Caco-2 (cell line): ENCODE measurements at regions of chr2 and their contacts with region 1.

Region 1: DNA sequence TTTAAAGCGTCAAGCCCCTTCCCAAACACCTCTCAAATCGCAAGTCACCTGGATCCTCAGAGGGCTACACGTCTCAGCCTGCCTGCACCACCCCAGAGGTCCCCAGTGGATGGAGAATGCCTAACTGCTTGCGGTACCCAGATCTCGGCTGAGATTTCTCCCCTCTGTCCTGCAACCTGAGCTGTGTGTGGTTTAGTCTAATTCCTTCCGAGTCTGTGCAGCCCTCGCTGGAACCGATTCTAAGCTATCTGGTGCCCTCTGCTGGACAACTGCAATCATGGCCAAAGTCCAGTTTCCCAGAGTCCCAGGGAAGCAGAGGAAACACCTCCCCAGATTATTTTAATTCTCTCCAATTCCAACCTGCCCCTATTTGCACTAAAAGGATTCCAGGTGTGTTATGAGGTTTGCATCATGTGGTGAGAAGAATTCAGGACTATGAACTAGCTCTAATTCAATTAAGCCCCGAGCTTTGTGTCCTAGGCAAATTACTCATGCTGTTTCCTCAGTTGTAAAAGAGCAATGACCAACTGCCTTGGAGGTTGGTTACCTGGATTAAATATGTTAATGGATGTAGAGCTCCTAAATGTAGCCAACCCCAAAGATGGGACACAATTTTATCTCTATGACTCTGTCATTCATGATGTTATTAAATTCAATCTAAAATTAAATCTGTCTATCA is 276.1 kb upstream of the NCKAP5 start:
- DNase-seq: peak; percentile 68 to 79
- H3K4me3 ChIP-seq: no peak overlapping the region
- H3K4me3 Mint-ChIP-seq: no peak overlapping the region
- H3K27ac Mint-ChIP-seq: no peak overlapping the region
- H3K4me1 ChIP-seq: no peaks in the 10 kb centered on the region
- H3K4me1 Mint-ChIP-seq: peaks cover 12% of the 10 kb centered on the region
- H3K27me3 ChIP-seq: no peaks in the 10 kb centered on the region
- H3K27me3 Mint-ChIP-seq: no peaks in the 10 kb centered on the region
- CTCF ChIP-seq: peak; percentile 80 to 90

Region 2: DNA sequence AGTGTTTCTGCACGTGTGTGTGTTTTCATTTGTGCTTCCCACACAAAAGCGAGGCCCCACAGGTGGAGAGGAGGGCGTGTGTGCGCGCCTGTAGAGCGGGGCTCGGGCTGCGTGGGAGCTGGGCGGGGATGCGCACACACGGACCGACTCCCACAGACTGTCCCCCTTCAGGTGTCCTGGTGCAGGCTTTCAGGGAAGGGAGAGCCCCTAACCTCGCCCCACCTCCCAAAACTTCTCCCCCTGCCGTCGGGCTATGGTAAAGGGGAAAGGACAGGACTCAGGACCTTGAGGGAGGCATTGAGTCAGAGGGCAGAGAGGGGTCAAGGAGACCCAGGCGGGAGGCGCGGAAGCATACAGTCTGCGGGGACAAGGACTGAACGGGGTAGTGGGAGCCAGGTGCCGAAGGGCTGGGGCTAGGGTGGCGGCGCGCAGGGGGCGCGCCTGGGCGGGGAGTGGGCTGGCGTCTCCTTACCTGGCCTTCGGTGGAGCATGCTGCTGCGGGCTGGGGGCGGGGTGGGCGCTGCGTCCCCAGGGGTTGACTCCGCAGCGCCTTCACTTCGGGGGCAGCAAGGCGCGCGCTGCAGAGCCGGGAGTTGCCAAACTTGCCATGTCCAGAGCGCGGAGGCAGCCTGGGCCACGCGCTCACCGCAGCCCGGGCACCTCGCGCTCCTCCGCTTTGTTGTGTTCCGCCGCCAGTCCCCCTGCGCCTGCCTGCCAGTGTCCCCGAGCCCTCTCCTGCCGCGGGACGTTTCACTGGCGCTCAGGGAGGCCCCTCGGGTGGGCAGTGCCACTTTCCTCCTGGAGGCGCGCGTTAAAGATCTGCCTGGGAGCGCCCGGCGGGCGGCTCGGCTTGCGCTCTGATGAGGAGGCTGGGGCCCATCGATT is 578.1 kb before region 1 on chr2:
- CTCF ChIA-PET with region 1: interaction called, 3 read pairs
- POLR2A ChIA-PET with region 1: no interaction called
- intact Hi-C with region 1: loop called (anchors 1 kb)
- DNase-seq: no peak
- H3K4me3 ChIP-seq: peak overlapping the region; percentile 24; the same call in 1 of the 2 replicates
- H3K4me3 Mint-ChIP-seq: peak overlapping the region; percentile 66
- H3K27ac Mint-ChIP-seq: no peak overlapping the region
- H3K4me1 ChIP-seq: no peaks in the 10 kb centered on the region
- H3K4me1 Mint-ChIP-seq: peaks cover 15% of the 10 kb centered on the region
- H3K27me3 ChIP-seq: no peaks in the 10 kb centered on the region
- H3K27me3 Mint-ChIP-seq: no peaks in the 10 kb centered on the region
- CTCF ChIP-seq: no peak

Region 3: GRCh38 chr2:133561045-133561852 is 283.1 kb before region 1 on chr2:
- CTCF ChIA-PET with region 1: no interaction called
- POLR2A ChIA-PET with region 1: no interaction called
- intact Hi-C with region 1: loop called (anchors 1 kb)
- DNase-seq: peak in 1 of 2 experiments; percentile 21
- H3K4me3 ChIP-seq: no peak overlapping the region
- H3K4me3 Mint-ChIP-seq: no peak overlapping the region
- H3K27ac Mint-ChIP-seq: no peak overlapping the region
- H3K4me1 ChIP-seq: no peaks in the 10 kb centered on the region
- H3K4me1 Mint-ChIP-seq: no peaks in the 10 kb centered on the region
- H3K27me3 ChIP-seq: no peaks in the 10 kb centered on the region
- H3K27me3 Mint-ChIP-seq: no peaks in the 10 kb centered on the region
- CTCF ChIP-seq: peak; percentile 58 to 72

Region 4: DNA sequence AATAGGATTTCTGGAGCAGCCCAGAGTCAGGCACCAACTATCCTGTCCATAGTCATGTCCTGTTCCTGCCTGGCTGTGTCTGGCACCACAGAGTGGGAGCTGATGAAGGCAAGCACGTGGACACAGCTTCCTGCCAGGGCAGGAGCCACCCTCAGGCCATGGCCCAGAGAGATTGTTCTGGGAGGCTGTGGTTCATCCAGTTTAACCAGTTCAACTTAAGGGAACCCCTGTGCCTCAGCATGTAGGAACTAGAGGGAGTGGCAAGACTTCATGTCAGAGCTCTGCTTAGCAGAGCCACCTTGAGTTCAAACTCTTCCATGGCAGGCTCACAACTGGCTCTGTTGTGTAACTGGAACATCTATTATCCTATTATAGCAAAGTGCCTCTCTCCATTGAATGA is 202.9 kb before region 1 on chr2:
- CTCF ChIA-PET with region 1: interaction called, 4 read pairs
- POLR2A ChIA-PET with region 1: no interaction called
- intact Hi-C with region 1: loop called (anchors 10 kb)
- DNase-seq: peak; percentile 81
- H3K4me3 ChIP-seq: no peak overlapping the region
- H3K4me3 Mint-ChIP-seq: no peak overlapping the region
- H3K27ac Mint-ChIP-seq: peak overlapping the region; percentile 7
- H3K4me1 ChIP-seq: peaks cover 9% of the 10 kb centered on the region
- H3K4me1 Mint-ChIP-seq: no peaks in the 10 kb centered on the region
- H3K27me3 ChIP-seq: no peaks in the 10 kb centered on the region
- H3K27me3 Mint-ChIP-seq: peaks cover 6% of the 10 kb centered on the region
- CTCF ChIP-seq: peak; percentile 33 to 52